GM12878 (cell line): ENCODE measurements at regions of chr22 and their contacts with region 1.

Region 1: DNA sequence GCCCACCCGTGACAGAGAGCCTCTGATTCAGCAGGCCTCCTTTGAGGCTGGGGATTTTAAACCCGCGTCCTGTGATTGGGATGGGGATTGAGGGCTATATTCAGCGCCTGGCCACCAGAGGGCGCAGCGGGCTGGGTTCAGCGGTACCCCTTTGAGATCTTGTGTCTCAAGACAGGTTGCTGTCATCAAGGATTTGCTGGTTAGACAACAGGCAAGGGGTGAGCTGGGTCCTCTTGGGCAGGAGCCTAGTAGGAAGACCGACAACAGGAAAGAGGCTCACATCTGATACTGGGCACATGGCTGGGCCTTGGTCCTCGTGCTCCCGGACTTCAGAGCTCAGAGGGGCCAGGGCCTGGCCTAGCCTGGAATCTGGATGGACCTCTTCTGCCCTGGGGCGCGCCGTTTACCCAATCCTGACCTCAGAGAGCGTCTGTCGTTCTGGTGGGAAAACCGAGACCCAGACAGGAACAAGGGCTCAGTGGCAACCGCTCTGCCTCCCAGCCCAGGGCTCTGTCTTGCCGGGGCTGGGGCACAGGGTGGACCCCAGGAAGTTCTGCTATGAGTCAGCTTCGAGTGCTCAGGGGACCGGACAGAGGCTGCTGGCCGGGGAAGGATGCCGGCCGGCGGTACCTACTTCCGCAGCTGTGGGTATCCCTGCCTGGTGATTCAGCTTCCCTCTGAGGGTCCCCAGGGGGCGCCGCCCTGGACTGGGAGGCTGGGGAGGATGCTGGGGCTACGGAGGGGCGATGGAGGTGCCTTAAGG is 929 bp upstream of the SLC35E4 start:
- DNase-seq: peak; percentile 47
- ATAC-seq: peak; percentile 70
- H3K4me3 ChIP-seq: peak overlapping the region; percentile 76
- H3K27ac ChIP-seq: peak overlapping the region; percentile 51
- H3K4me1 ChIP-seq: peaks cover 4% of the 10 kb centered on the region; the same call in 1 of the 2 replicates
- H3K27me3 ChIP-seq: no peaks in the 10 kb centered on the region
- CTCF ChIP-seq: peak; percentile 92 to 96 (median 93)
- EP300 ChIP-seq: no peak
- POLR2A ChIP-seq: no peak
- RAD21 ChIP-seq: peak; percentile 96

Region 2: DNA sequence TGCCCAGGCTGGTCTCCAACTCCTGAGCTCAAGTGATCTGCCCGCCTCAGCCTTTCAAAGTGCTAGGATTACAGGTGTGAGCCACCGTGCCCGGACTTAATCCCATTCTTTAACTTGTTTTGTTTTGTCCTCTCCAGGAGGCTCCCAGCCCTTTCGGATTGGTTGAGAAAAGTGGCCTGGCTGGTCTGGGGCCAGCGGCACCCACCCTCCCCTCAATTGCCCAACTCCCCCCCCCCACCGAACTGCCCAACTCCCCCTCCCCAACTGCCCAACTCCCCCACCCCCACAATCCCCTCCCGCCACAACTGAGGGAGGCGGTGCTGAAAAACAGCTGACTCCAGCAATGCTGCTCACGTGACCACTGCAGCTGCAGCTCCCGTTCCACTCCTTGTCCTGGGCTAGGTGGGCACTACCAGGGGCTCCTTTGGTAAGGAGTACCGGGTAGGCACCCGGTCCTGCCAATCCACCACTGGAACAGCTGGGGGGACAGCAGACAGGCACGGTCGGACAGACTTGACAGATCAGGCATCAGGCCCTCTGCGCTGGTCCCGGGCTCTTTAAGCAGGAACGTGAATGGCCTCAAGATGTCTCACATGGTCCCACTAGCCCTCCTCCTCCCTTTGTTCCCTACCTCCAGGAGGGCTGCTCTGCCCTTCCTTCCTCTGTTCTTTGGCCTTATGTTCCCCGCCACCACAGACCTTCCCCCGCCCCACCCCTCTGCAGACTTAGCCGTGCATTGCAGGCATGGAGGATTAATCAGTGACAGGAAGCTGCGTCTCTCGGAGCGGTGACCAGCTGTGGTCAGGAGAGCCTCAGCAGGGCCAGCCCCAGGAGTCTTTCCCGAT is 28.0 kb before region 1 on chr22 and contains the start of gene TCN2:
- CTCF ChIA-PET with region 1: interaction called, 51 read pairs
- POLR2A ChIA-PET with region 1: interaction called, 7 read pairs
- RAD21 ChIA-PET with region 1: interaction called, 58 read pairs
- SMC1A ChIA-PET with region 1: interaction called, 8 read pairs
- in situ Hi-C with region 1: no loop called
- intact Hi-C with region 1: no loop called
- DNase-seq: no peak
- ATAC-seq: peak; percentile 79
- H3K4me3 ChIP-seq: peak within 1 kb of the TSS; percentile 66
- H3K27ac ChIP-seq: peak within 1 kb of the TSS; percentile 54
- H3K4me1 ChIP-seq: peaks cover 51% of the 10 kb centered on the region
- H3K27me3 ChIP-seq: no peaks in the 10 kb centered on the region
- CTCF ChIP-seq: 0 out of 6 replicates have a peak, but pooled peaks of 1 of the 3 experiments have one; percentile 12
- EP300 ChIP-seq: no peak
- POLR2A ChIP-seq: peak; percentile 62; the same call in 1 of the 2 replicates
- RAD21 ChIP-seq: no peak
- polyA plus RNA-seq, gene TCN2: 15.9 to 21.8 TPM

Region 3: GRCh38 chr22:30667494-30668385 is 33.1 kb after region 1 on chr22 and contains the start of gene DUSP18:
- CTCF ChIA-PET with region 1: interaction called, 12 read pairs
- POLR2A ChIA-PET with region 1: interaction called, 4 read pairs
- RAD21 ChIA-PET with region 1: interaction called, 5 read pairs
- SMC1A ChIA-PET with region 1: interaction called, 14 read pairs
- in situ Hi-C with region 1: no loop called
- intact Hi-C with region 1: loop called (anchors 1 kb)
- DNase-seq: peak; percentile 64
- ATAC-seq: peak; percentile 98
- H3K4me3 ChIP-seq: peak within 1 kb of the TSS; percentile 77
- H3K27ac ChIP-seq: no peak within 1 kb of the TSS; the same call in 1 of the 2 replicates
- H3K4me1 ChIP-seq: no peaks in the 10 kb centered on the region
- H3K27me3 ChIP-seq: no peaks in the 10 kb centered on the region
- CTCF ChIP-seq: peak in 2 of 3 experiments; percentile 21 to 25; a peak in 1 of 6 replicates
- EP300 ChIP-seq: no peak
- POLR2A ChIP-seq: peak; percentile 82
- RAD21 ChIP-seq: no peak
- polyA plus RNA-seq, gene DUSP18: 1.9 to 2.5 TPM

Region 4: GRCh38 chr22:30742291-30743256 is 107.9 kb after region 1 on chr22:
- CTCF ChIA-PET with region 1: interaction called, 20 read pairs
- POLR2A ChIA-PET with region 1: interaction called, 5 read pairs
- RAD21 ChIA-PET with region 1: interaction called, 19 read pairs
- SMC1A ChIA-PET with region 1: interaction called, 14 read pairs
- in situ Hi-C with region 1: no loop called
- intact Hi-C with region 1: no loop called
- DNase-seq: no peak
- ATAC-seq: peak; percentile 7; the same call in 1 of the 3 replicates
- H3K4me3 ChIP-seq: no peak overlapping the region; the same call in 1 of the 2 replicates
- H3K27ac ChIP-seq: no peak overlapping the region; the same call in 1 of the 2 replicates
- H3K4me1 ChIP-seq: peaks cover 52% of the 10 kb centered on the region
- H3K27me3 ChIP-seq: no peaks in the 10 kb centered on the region
- CTCF ChIP-seq: no peak
- EP300 ChIP-seq: no peak
- POLR2A ChIP-seq: no peak
- RAD21 ChIP-seq: no peak

Region 5: DNA sequence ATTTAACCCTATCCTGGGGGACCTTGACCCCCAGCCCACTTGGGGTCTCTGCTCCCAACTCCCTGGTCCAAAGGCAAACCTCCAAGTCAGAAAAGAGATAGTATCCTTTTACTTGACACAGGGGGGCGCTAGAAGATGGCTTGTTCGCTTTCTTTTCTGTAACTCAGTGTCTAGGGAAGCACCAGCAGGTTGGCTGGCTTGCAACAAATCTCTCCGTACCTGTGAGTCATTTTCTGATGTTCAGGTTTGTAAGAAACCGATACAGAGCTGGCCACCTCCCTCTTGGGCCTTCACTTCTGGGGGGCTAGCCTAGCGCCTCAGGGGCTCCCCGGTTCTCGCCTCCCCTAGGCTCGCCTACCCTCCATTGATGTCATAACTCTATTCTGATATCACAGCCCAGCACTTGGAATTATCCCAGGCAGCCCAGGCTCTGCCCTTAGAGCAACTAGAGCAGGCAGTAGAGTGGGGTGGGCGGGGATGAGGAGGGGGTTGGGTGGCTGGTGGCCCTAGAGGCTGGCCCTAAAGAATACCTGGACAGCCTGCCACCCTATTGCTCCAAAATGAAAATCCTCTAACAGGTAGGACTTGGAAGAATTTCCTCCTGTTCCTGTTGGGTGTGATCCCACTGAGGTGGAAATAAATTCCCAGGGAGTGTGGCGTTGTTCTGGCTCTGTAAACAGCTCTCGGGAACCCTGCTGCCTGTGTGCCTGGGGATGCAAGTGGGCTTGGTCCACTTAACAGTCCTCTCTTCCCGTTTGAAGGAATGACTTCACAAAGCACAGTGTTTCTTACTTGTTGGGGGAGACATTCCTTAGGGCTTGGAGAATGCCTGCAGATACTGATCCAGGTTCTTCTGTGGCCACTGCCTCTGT is 129.4 kb after region 1 on chr22:
- CTCF ChIA-PET with region 1: interaction called, 243 read pairs
- POLR2A ChIA-PET with region 1: no interaction called
- RAD21 ChIA-PET with region 1: interaction called, 18 read pairs
- SMC1A ChIA-PET with region 1: no interaction called
- in situ Hi-C with region 1: loop called (anchors 5 kb)
- intact Hi-C with region 1: no loop called
- DNase-seq: no peak
- ATAC-seq: peak; percentile 90
- H3K4me3 ChIP-seq: no peak overlapping the region
- H3K27ac ChIP-seq: no peak overlapping the region
- H3K4me1 ChIP-seq: no peaks in the 10 kb centered on the region
- H3K27me3 ChIP-seq: no peaks in the 10 kb centered on the region
- CTCF ChIP-seq: peak; percentile 60 to 78 (median 62); a peak in 5 of 6 replicates
- EP300 ChIP-seq: no peak
- POLR2A ChIP-seq: no peak
- RAD21 ChIP-seq: peak; percentile 90

Region 6: GRCh38 chr22:31080848-31081649 is 446.4 kb after region 1 on chr22 and contains the start of gene SMTN:
- CTCF ChIA-PET with region 1: interaction called, 5 read pairs
- POLR2A ChIA-PET with region 1: no interaction called
- RAD21 ChIA-PET with region 1: interaction called, 10 read pairs
- SMC1A ChIA-PET with region 1: interaction called, 4 read pairs
- in situ Hi-C with region 1: no loop called
- intact Hi-C with region 1: loop called (anchors 10 kb)
- DNase-seq: peak; percentile 56
- ATAC-seq: peak; percentile 74
- H3K4me3 ChIP-seq: peak within 1 kb of the TSS; percentile 80
- H3K27ac ChIP-seq: peak within 1 kb of the TSS; percentile 71
- H3K4me1 ChIP-seq: peaks cover 28% of the 10 kb centered on the region
- H3K27me3 ChIP-seq: no peaks in the 10 kb centered on the region
- CTCF ChIP-seq: no peak
- EP300 ChIP-seq: no peak
- POLR2A ChIP-seq: peak; percentile 91
- RAD21 ChIP-seq: no peak
- polyA plus RNA-seq, gene SMTN: 0.92 to 2.6 TPM